Left cardiac atrium (tissue), 4 donors: ENCODE measurements at regions of chr5 and their contacts with region 1.

Region 1: DNA sequence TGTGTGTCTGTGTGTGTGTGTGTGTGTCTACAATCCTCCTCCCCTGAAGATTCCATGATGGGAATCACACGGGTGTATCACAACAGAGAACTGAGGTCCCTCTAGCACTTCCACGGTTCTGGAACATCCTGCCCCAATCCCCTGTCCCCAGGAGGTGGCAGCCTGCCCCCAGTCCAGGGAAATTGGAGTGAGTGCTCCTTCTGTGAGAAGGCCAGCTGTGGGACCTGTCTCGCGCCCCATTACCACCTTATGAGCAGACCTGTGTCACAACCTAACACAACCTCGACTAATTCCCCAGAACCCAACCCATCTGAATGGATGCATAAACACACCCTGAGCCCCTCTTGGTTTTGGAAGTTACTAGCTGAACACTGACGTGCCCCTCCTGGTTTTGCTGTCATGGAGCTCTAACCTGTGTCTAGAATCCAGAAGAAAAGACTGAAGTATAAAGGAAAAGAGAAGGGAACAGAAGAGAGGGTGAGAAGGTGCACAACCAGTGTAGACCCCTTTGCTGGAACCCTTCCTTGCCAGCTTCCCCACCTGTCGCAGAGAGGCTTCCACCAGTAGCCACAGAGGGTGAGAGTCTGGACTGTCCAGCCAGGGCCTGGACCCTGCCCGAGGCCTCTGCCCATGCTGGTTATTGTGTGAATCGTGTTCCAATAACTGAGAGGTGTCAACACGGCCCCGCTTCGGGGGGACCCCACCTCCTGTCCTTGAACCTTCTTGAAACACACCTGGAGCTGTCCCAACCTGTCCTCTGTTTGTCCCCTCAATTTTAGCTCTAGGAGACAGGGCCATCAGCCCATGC is 3.4 kb downstream of the BTNL9 start:
- DNase-seq: no peak
- ATAC-seq: peak in 1 of 2 donors; percentile 23

Region 2: DNA sequence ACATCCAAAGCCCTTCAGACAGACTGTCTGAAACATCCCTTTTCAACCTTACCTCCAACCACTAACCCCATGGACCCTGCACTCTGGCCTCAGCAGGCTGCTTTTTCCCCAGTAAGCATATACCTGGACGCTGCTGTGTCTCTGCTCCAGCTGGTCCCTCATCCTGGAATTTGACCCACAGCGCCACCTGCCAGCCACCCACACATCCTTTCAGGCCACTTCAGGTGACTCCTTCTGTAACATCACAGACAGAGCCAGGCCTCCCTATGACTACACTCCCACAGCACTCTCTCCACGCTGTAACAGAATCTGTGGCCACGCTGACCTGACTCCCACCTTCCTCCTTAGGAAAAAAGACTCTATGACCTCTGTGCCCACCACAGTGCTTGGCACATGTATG is 244.3 kb before region 1 on chr5:
- intact Hi-C with region 1: loop called in 1 of 2 experiments (anchors 10 kb)
- DNase-seq: no peak
- ATAC-seq: no peak

Region 3: DNA sequence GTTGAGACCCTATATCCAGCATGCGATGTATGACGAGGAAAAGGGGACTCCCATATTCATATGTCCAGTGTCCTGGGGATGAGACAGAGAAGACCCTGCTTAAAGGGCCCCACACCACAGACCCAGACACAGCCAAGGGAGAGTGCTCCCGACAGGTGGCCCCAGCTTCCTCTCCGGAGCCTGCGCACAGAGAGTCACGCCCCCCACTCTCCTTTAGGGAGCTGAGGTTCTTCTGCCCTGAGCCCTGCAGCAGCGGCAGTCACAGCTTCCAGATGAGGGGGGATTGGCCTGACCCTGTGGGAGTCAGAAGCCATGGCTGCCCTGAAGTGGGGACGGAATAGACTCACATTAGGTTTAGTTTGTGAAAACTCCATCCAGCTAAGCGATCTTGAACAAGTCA is 37.7 kb before region 1 on chr5:
- intact Hi-C with region 1: no loop called
- DNase-seq: no peak
- ATAC-seq: no peak

Region 4: GRCh38 chr5:181076920-181077319 is 33.4 kb after region 1 on chr5:
- intact Hi-C with region 1: no loop called
- DNase-seq: no peak
- ATAC-seq: no peak